AG04450 (cell line): ENCODE measurements at regions of chr15 and their contacts with region 1.

Region 1: DNA sequence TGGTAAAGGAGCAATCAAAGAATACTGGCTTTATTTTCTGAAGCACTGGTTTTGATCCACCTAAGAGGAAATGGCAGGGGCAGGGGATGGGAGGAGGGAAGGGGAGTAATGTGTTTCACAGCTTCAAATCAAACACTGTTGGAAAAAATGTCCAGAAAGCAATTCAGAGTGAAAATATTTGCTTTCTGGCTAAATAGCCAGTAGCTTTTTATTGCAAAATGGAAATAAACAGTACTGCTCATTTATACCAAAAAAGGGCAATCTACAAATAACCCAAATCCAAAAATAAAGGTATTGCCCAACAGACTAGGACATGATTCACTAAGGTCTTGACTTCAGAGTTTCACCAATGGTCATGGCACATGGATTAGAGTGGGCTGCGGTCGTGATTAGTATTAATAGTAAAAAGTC is 279.3 kb upstream of the THBS1 start:
- DNase-seq: no peak
- H3K4me3 ChIP-seq: no peak overlapping the region
- H3K27ac ChIP-seq: peak overlapping the region; percentile 69
- H3K27me3 ChIP-seq: no peaks in the 10 kb centered on the region
- CTCF ChIP-seq: no peak

Region 2: GRCh38 chr15:39180483-39180933 is 121.1 kb before region 1 on chr15:
- CTCF ChIA-PET with region 1: no interaction called
- POLR2A ChIA-PET with region 1: interaction called, 19 read pairs
- DNase-seq: peak; percentile 77
- H3K4me3 ChIP-seq: no peak overlapping the region
- H3K27ac ChIP-seq: peak overlapping the region; percentile 71
- H3K27me3 ChIP-seq: no peaks in the 10 kb centered on the region
- CTCF ChIP-seq: no peak

Region 3: DNA sequence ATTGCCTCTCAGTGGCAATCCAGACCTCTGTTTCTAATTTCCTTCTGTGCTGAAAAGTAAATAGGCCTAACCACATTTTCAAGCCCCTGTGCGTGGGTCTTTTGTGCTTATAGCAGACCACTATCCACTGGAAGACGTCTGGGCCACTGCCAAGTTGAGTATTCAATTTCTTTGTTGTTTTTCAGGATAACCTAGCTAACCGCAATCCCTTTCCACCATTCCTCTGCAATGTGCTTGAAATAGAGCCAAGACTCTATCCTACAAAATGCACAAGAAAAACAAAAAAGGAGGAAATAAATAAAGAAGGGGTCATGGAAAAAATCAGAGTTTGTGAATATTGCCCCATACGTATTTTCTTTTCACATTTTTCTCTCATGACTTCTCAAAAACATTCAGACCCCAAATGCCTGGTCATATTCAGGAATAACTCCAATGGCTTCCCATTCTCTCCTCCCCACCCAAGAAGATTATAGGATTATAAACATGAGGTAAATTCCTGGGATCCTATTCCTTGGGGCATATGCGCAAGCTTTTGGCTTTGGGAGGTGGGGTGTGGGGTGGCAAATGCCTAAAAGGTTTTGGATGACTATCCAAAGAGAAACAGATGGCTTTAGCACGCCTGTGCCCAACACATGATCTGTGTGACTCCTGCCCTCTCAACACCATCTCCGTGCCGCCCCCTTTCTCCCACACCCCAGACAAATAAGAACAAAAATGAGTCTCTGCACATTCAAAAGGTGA is 61.4 kb after region 1 on chr15:
- CTCF ChIA-PET with region 1: no interaction called
- POLR2A ChIA-PET with region 1: interaction called, 12 read pairs
- DNase-seq: peak; percentile 92
- H3K4me3 ChIP-seq: no peak overlapping the region
- H3K27ac ChIP-seq: peak overlapping the region; percentile 63
- H3K27me3 ChIP-seq: no peaks in the 10 kb centered on the region
- CTCF ChIP-seq: no peak